Activated CD4-positive, alpha-beta memory T cell treated with anti-CD3 and anti-CD28 coated beads for 36 hours (primary cell): ENCODE measurements at regions of chr1 and their contacts with region 1.

Region 1: GRCh38 chr1:192316942-192317450 is at the start of gene RGS21:
- DNase-seq: no peak
- H3K4me3 Mint-ChIP-seq: no peak within 1 kb of the TSS
- H3K27ac Mint-ChIP-seq: no peak within 1 kb of the TSS
- H3K4me1 Mint-ChIP-seq: no peaks in the 10 kb centered on the region
- H3K27me3 Mint-ChIP-seq: no peaks in the 10 kb centered on the region
- total RNA-seq, gene RGS21: not detected

Region 2: DNA sequence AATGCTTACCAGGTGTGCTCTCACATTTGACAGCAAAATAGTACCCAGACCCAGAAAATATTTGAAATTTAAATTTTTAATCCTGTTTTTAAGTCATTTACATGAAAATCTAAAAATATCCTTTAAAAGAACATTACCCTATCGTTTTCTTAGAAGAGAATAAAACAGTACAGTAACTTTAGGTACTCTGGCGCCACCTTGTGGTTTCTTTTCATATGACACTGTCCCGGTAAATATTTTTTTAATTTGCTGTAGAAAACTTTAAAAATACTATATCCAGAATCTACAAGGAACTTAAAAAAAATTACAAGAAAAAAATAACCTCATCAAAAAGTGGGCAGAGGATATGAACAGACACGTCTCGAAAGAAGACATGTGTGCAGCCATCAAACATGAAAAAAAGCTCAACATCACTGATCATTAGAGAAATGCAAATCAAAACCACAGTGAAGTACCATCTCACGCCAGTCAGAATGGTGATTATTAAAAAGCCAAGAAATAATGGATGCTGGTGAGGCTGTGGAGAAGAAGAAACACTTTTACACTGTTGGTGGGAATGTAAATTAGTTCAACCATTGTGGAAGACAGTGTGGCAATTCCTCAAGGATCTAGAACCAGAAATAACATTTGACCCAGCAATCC is 129.0 kb after region 1 on chr1:
- CTCF ChIA-PET with region 1: no interaction called
- POLR2A ChIA-PET with region 1: no interaction called
- intact Hi-C with region 1: loop called (anchors 5 kb)
- DNase-seq: peak; percentile 48
- H3K4me3 Mint-ChIP-seq: no peak overlapping the region
- H3K27ac Mint-ChIP-seq: no peak overlapping the region
- H3K4me1 Mint-ChIP-seq: no peaks in the 10 kb centered on the region
- H3K27me3 Mint-ChIP-seq: peaks cover 6% of the 10 kb centered on the region